ENCODE measurements at regions of chr1 and their contacts with region 1.

Region 1: GRCh38 chr1:23403735-23404486 is 20.6 kb downstream of the TCEA3 start:
- DNase-seq: peak; percentile 82 to 92
- H3K4me3 ChIP-seq: no peak overlapping the region
- H3K27ac ChIP-seq: peak overlapping the region in 1 of 2 donors; percentile 48
- H3K4me1 ChIP-seq: peaks cover 0 to 24% (median 15%) of the 10 kb centered on the region in 4 donors
- H3K27me3 ChIP-seq: no peaks in the 10 kb centered on the region
- CTCF ChIP-seq: peak; percentile 91 to 92

Region 2: DNA sequence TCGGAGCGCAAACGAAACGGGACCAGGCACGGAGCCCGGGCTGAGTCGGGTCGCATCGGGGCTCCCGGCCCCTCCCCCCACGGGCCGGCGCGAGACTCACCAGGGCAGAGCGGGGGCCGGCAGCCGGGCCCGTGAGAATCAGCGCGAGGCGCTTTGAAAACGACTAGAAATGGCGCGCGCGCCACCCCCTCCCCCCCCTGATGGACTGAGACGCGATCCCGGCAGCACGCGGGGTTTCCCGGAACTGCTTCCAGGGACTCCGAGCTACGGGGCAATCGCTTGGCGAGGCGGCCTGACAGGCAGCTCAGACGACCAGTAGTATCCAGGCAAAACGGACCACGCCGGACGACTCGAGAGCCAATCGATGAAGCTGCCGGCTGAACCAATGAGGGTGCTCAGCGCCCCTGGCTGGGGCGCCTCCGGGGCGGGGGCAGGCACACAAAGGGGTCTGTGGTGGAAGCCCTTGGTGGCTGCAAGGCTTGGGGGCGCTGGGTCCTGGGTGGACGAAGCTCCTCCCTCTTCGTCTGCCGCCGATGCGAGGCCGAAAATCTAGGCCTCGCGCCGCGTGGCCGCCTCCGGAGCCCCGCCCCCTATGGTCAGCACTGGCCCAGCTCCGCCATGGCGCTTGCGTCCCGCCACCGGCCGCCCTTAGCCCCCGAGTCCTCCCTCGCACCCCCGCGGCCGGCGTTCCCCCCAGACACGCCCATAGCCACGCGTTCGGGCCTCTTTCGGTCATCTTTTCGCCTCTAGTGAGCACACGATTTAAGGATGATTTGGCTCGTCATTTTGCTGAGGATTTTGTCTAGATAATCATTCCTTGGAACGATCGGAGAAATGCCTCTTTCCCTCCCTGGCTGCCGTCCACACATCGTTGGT is 59.6 kb before region 1 on chr1 and contains the start of gene HNRNPR:
- intact Hi-C with region 1: loop called (anchors 10 kb)
- DNase-seq: peak; percentile 99 to 100
- H3K4me3 ChIP-seq: peak within 1 kb of the TSS; percentile 80 to 89
- H3K27ac ChIP-seq: peak within 1 kb of the TSS; percentile 95 to 98
- H3K4me1 ChIP-seq: peaks cover 0 to 43% (median 29%) of the 10 kb centered on the region in 4 donors
- H3K27me3 ChIP-seq: no peaks in the 10 kb centered on the region
- CTCF ChIP-seq: peak in 1 of 2 experiments; percentile 10

Region 3: DNA sequence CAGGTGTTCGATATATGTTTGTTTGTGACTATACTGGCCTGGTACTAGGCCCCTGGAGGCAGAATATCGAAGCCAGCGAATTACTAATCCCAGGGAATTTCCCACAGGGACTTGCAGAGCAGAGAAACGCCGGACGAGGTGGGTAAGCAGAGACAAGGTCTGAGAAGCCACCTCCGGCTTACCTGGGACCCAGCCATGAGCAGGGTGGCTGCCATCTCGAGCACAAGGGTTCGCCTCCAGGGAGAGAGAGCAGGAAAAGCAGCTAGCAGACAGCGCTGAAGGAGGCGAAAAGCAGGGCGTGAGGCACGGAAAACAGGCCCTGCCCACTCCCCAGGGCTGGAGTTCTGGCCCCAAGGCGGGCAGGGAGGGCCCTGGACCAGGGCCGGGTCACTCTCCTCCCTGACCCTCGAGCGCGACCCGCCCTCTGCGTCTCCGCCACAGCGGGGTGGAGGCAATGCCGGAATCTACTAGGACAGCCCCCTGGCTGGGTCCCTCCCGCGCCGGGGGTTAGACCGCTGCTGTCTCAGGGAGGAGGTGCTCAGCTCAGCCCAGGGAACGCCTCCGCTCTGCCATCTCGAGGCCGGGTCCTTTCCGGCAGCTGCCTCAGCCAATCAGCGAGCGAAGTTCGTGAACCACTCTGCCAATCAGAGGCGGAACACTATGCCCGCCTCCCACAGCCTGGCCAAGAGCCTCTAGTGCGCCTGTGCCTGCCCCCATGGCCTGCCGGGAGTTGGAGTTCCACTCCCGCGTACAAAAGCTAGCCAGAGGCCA is 35.9 kb before region 1 on chr1:
- intact Hi-C with region 1: loop called (anchors 1 kb)
- DNase-seq: peak; percentile 98 to 99
- H3K4me3 ChIP-seq: peak overlapping the region; percentile 71 to 95
- H3K27ac ChIP-seq: peak overlapping the region; percentile 98 to 99
- H3K4me1 ChIP-seq: peaks cover 0 to 47% (median 39%) of the 10 kb centered on the region in 4 donors
- H3K27me3 ChIP-seq: no peaks in the 10 kb centered on the region
- CTCF ChIP-seq: no peak

Measured in tibial artery (tissue), 4 donors.